ENCODE measurements at regions of chr9 and their contacts with region 1.

Region 1: GRCh38 chr9:113309204-113309813 is 6.1 kb upstream of the RNF183 start:
- DNase-seq: peak; percentile 31 to 63 (median 34)
- ATAC-seq: peak; percentile 83
- H3K4me3 ChIP-seq: no peak overlapping the region
- H3K27ac ChIP-seq: no peak overlapping the region
- H3K4me1 ChIP-seq: no peaks in the 10 kb centered on the region; a peak in 1 of 5 replicates
- H3K27me3 ChIP-seq: peaks cover 6 to 18% of the 10 kb centered on the region in 2 experiments; a peak in 4 of 5 replicates
- CTCF ChIP-seq: peak; percentile 57 to 90 (median 62); a peak in 5 of 6 replicates
- EP300 ChIP-seq: no peak
- POLR2A ChIP-seq: no peak
- RAD21 ChIP-seq: peak; percentile 91 to 92

Region 2: DNA sequence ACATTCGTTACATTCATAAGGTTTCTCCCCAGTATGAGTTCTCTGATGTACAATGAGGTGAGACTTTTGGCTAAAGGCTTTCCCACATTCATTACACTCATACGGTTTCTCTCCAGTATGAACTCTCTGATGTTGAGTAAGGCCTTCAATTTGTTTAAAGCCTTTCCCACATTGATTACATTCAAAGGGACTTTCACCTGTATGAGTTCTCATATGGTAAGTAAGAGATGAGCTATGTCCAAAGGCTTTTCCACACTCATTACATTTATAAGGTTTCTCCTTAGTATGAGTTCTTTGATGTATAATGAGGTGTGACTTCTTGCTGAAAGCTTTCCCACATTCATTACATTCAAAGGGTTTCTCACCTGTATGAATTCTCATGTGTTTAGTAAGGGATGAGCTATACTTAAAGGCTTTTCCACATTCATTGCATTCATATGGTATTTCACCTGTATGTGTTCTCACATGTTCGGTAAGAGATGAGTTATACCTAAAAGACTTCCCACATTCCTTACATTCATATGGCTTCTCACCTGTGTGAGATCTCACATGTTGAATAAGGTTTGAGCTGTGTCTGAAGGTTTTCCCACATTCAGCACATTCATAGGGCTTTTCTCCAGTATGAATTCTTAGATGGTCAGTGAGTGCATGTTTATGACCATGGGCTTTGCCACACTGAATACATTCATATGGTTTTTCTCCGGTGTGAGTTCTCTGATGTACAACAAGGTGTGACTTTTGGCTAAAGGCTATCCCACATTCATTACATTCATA is 266.2 kb before region 1 on chr9:
- CTCF ChIA-PET with region 1: no interaction called
- POLR2A ChIA-PET with region 1: no interaction called
- in situ Hi-C with region 1: no loop called
- intact Hi-C with region 1: no loop called
- DNase-seq: no peak
- ATAC-seq: no peak
- H3K4me3 ChIP-seq: no peak overlapping the region
- H3K27ac ChIP-seq: no peak overlapping the region
- H3K4me1 ChIP-seq: no peaks in the 10 kb centered on the region
- H3K27me3 ChIP-seq: no peaks in the 10 kb centered on the region
- CTCF ChIP-seq: no peak
- EP300 ChIP-seq: no peak
- POLR2A ChIP-seq: no peak
- RAD21 ChIP-seq: no peak

Region 3: DNA sequence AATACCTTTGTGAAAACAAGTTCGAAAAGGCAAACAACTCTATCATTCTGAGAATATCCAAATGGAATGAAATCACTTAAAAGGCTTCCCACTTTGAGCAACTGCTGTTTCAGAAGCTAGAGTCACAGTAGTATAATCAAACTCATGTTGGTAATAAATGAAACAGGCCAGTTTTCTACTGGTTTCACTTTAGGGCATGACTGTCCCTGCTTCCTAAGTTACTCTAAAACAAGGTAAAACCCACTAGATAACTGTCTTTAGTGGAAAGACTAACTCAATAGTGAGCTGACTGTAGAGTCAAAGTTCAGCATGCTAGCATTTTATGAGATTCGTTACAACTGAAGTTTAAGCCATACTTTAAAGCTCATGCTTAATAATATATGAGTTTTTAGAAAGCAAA is 40.0 kb before region 1 on chr9:
- CTCF ChIA-PET with region 1: no interaction called
- POLR2A ChIA-PET with region 1: no interaction called
- in situ Hi-C with region 1: no loop called
- intact Hi-C with region 1: no loop called
- DNase-seq: no peak
- ATAC-seq: no peak
- H3K4me3 ChIP-seq: no peak overlapping the region
- H3K27ac ChIP-seq: no peak overlapping the region
- H3K4me1 ChIP-seq: peaks cover 0 to 4% of the 10 kb centered on the region in 2 experiments; a peak in 1 of 5 replicates
- H3K27me3 ChIP-seq: no peaks in the 10 kb centered on the region
- CTCF ChIP-seq: no peak
- EP300 ChIP-seq: no peak
- POLR2A ChIP-seq: no peak
- RAD21 ChIP-seq: no peak

Region 4: GRCh38 chr9:113376634-113377567 is 67.6 kb after region 1 on chr9 and contains the start of gene HDHD3:
- CTCF ChIA-PET with region 1: no interaction called
- POLR2A ChIA-PET with region 1: no interaction called
- in situ Hi-C with region 1: no loop called
- intact Hi-C with region 1: loop called (anchors 2 kb)
- DNase-seq: peak; percentile 88 to 96 (median 94)
- ATAC-seq: peak; percentile 87
- H3K4me3 ChIP-seq: peak within 1 kb of the TSS; percentile 87
- H3K27ac ChIP-seq: peak within 1 kb of the TSS; percentile 79
- H3K4me1 ChIP-seq: peaks cover 25 to 26% of the 10 kb centered on the region in 2 experiments; a peak in 4 of 5 replicates
- H3K27me3 ChIP-seq: no peaks in the 10 kb centered on the region
- CTCF ChIP-seq: no peak
- EP300 ChIP-seq: no peak
- POLR2A ChIP-seq: peak; percentile 81
- RAD21 ChIP-seq: no peak
- polyA plus RNA-seq, gene HDHD3: 1.1 to 2.0 TPM

Region 5: GRCh38 chr9:113401027-113401792 is 91.9 kb after region 1 on chr9 and contains the start of gene ALAD:
- CTCF ChIA-PET with region 1: interaction called, 14 read pairs
- POLR2A ChIA-PET with region 1: interaction called, 5 read pairs
- in situ Hi-C with region 1: loop called (anchors 5 kb)
- intact Hi-C with region 1: no loop called
- DNase-seq: peak; percentile 99
- ATAC-seq: peak; percentile 98
- H3K4me3 ChIP-seq: peak within 1 kb of the TSS; percentile 82
- H3K27ac ChIP-seq: peak within 1 kb of the TSS; percentile 45
- H3K4me1 ChIP-seq: peaks cover 22 to 45% of the 10 kb centered on the region in 2 experiments; a peak in 4 of 5 replicates
- H3K27me3 ChIP-seq: no peaks in the 10 kb centered on the region
- CTCF ChIP-seq: peak; percentile 93 to 96 (median 95)
- EP300 ChIP-seq: no peak
- POLR2A ChIP-seq: peak; percentile 73
- RAD21 ChIP-seq: peak; percentile 78 to 81
- polyA plus RNA-seq, gene ALAD: 1.3 to 2.3 TPM

Region 6: DNA sequence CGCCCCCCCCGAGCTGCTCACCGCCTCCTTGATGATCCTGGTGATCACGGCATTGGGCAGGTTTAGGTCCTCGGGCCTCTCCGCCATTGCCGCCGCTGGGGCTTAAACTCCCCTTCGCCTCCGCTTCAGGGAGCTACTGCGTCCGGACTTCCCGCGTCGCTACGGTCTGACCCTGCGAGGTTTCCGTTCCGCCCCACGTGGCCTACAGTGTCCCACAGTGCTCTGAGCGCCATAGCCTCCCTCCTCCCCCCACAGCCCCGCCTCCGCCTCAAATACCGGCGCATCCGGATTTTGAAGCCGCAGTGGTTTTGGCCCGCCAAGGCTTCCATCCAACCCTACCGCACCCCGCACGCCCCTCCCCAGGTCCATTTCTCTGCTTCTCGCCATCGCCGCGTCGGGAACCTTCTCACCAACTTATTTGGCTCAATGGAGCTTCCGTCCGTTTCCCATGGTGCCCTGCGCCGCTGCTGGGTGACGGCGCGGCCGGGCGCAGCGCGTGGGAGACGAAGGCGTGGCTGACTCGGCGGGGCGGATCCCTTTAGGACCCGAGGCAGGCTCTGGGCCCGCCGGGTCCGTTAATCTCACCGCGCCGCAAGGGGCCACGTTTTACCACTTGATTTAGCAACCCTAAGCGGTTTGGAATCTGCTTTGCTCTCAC is 101.0 kb after region 1 on chr9 and contains the starts of genes C9orf43 and POLE3:
- CTCF ChIA-PET with region 1: interaction called, 14 read pairs
- POLR2A ChIA-PET with region 1: interaction called, 8 read pairs
- in situ Hi-C with region 1: loop called (anchors 5 kb)
- intact Hi-C with region 1: loop called (anchors 1 kb)
- DNase-seq: peak; percentile 92 to 98 (median 94)
- ATAC-seq: peak; percentile 94
- H3K4me3 ChIP-seq: peak within 1 kb of the TSS; percentile 88
- H3K27ac ChIP-seq: peak within 1 kb of the TSS; percentile 87
- H3K4me1 ChIP-seq: peaks cover 12 to 22% of the 10 kb centered on the region in 2 experiments; a peak in 4 of 5 replicates
- H3K27me3 ChIP-seq: no peaks in the 10 kb centered on the region
- CTCF ChIP-seq: peak in 1 of 3 experiments; percentile 32; a peak in 1 of 6 replicates
- EP300 ChIP-seq: peak; percentile 52
- POLR2A ChIP-seq: peak; percentile 85
- RAD21 ChIP-seq: peak in 1 of 2 experiments; percentile 17; a peak in 1 of 4 replicates
- polyA plus RNA-seq, gene C9orf43: 0.21 to 0.31 TPM
- polyA plus RNA-seq, gene POLE3: 52.6 to 110 TPM

Region 7: GRCh38 chr9:113591001-113591898 is 281.9 kb after region 1 on chr9:
- CTCF ChIA-PET with region 1: interaction called, 3 read pairs
- POLR2A ChIA-PET with region 1: no interaction called
- in situ Hi-C with region 1: no loop called
- intact Hi-C with region 1: loop called (anchors 2 kb)
- DNase-seq: peak; percentile 75 to 83 (median 79)
- ATAC-seq: peak; percentile 87
- H3K4me3 ChIP-seq: no peak overlapping the region
- H3K27ac ChIP-seq: no peak overlapping the region
- H3K4me1 ChIP-seq: peaks cover 0 to 9% of the 10 kb centered on the region in 2 experiments; a peak in 3 of 5 replicates
- H3K27me3 ChIP-seq: peaks cover 0 to 4% of the 10 kb centered on the region in 2 experiments; a peak in 2 of 5 replicates
- CTCF ChIP-seq: peak; percentile 91 to 97 (median 96)
- EP300 ChIP-seq: no peak
- POLR2A ChIP-seq: no peak
- RAD21 ChIP-seq: peak; percentile 82 to 94